SK-N-SH (cell line): ENCODE measurements at regions of chr5 and their contacts with region 1.

Region 1: DNA sequence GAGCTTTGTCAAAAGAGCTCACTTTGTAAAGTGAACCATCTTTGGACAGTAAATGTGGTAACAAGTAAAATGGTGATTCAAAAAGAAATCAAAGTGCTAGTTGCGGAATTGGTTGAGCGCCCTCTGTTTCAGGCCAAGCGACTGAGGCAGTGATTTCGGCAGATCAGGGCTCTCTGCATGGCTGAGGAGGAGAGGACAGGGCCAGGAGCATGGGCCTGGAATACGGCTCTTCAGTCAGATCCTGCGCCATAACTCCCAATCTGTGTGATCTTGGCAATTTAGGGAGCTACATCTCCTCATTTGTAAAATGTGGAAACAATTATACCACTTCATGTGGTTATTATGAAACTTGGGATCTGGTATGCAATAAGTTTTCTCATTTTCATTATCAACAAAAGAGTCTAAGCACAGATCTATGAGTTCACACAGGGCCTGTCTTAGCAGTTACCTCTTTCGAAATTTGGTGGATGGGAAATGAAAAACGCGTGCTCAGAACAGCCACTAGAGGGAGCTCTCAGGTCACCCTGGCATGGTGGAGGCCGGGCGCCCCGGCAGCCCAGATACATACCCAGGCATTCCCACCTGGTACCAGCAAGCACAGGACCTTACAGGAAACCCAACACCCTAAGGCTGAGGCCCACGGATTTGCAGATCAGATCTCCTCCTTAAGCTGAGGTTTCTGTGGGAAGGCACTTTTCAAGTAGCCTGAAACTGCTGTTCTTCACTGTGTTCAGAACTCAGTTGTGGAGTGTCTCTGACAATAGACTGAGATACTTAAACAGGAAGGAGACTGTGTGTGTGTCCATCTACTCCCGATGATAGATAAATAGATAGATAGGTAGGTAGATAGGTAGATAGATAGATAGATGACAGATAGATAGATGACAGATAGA is 303.7 kb downstream of the RAB3C start:
- DNase-seq: peak; percentile 72
- H3K4me3 ChIP-seq: no peak overlapping the region; a peak in 1 of 4 replicates
- H3K27ac ChIP-seq: no peak overlapping the region
- H3K4me1 ChIP-seq: peaks cover 0 to 7% of the 10 kb centered on the region in 2 experiments; a peak in 1 of 4 replicates
- H3K27me3 ChIP-seq: no peaks in the 10 kb centered on the region
- CTCF ChIP-seq: peak; percentile 94
- EP300 ChIP-seq: no peak
- RAD21 ChIP-seq: peak; percentile 82

Region 2: GRCh38 chr5:58855851-58856739 is 30.5 kb before region 1 on chr5:
- CTCF ChIA-PET with region 1: interaction called, 20 read pairs
- POLR2A ChIA-PET with region 1: no interaction called
- DNase-seq: no peak
- H3K4me3 ChIP-seq: no peak overlapping the region
- H3K27ac ChIP-seq: no peak overlapping the region
- H3K4me1 ChIP-seq: no peaks in the 10 kb centered on the region
- H3K27me3 ChIP-seq: 0 out of 2 replicates have a peak, but pooled peaks cover 8% of the 10 kb centered on the region
- CTCF ChIP-seq: no peak
- EP300 ChIP-seq: no peak
- RAD21 ChIP-seq: no peak

Region 3: DNA sequence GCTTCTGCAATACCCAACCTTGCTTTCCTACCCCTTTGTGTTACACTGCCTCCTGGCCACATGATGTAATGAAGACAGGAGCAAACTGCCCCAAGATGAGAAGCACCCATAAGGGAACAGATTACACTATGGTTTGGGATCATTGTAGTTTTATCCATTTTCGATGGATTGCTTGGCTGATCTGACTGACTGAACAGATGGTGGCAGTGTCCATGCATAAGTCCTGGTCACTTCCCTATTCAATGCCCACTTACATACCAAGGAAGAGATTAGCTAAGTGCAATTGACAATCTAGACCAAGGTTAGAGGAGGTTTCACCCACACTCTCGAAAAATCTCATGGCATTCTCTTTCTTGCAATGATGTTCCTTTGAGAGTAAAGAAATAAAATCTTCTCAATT is 16.2 kb after region 1 on chr5:
- CTCF ChIA-PET with region 1: interaction called, 32 read pairs
- POLR2A ChIA-PET with region 1: no interaction called
- DNase-seq: no peak
- H3K4me3 ChIP-seq: no peak overlapping the region
- H3K27ac ChIP-seq: no peak overlapping the region
- H3K4me1 ChIP-seq: no peaks in the 10 kb centered on the region
- H3K27me3 ChIP-seq: no peaks in the 10 kb centered on the region
- CTCF ChIP-seq: no peak; the same call in 1 of the 2 replicates
- EP300 ChIP-seq: no peak
- RAD21 ChIP-seq: no peak

Region 4: DNA sequence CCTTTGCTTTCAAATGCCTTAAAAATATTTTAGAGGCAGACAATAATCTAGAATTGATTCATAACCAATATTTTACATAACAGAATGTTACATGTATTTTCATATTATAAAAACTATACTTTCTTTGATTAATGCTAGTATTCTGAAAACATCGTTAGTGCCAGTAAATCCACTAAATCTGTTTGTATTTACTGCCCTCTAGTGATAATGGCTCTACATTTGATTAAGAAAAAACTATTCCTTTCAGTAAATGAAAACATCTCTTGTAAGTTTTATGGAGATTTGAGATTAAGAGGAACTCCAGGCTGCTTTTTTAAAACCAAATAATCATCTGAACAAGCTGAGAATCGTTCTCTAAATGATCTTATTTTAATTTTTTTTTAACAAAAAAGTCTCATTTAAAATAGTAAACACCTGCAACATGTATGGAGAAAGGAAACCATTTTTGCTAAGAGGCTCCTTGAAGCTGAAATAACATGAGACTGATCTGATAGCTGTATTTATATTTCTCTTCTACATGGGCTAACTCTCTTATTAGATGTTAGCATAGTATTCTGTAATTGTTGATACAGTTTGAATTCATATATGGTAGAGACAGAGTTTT is 121.0 kb after region 1 on chr5:
- CTCF ChIA-PET with region 1: interaction called, 143 read pairs
- POLR2A ChIA-PET with region 1: no interaction called
- DNase-seq: peak; percentile 15
- H3K4me3 ChIP-seq: peak overlapping the region in 1 of 2 experiments; percentile 17; a peak in 1 of 4 replicates
- H3K27ac ChIP-seq: no peak overlapping the region
- H3K4me1 ChIP-seq: peaks cover 0 to 10% of the 10 kb centered on the region in 2 experiments; a peak in 1 of 4 replicates
- H3K27me3 ChIP-seq: no peaks in the 10 kb centered on the region
- CTCF ChIP-seq: peak; percentile 68
- EP300 ChIP-seq: no peak
- RAD21 ChIP-seq: peak; percentile 79

Region 5: GRCh38 chr5:59180515-59180914 is 294.0 kb after region 1 on chr5:
- CTCF ChIA-PET with region 1: interaction called, 37 read pairs
- POLR2A ChIA-PET with region 1: no interaction called
- DNase-seq: no peak
- H3K4me3 ChIP-seq: no peak overlapping the region
- H3K27ac ChIP-seq: no peak overlapping the region
- H3K4me1 ChIP-seq: peaks cover 0 to 5% of the 10 kb centered on the region in 2 experiments; a peak in 1 of 4 replicates
- H3K27me3 ChIP-seq: no peaks in the 10 kb centered on the region
- CTCF ChIP-seq: no peak
- EP300 ChIP-seq: no peak
- RAD21 ChIP-seq: no peak